Psoas muscle (tissue), 8 donors: ENCODE measurements at regions of chr1 and their contacts with region 1.

Region 1: GRCh38 chr1:179002552-179003345 is 22.9 kb upstream of the FAM20B start:
- DNase-seq: peak; percentile 74 to 84
- ATAC-seq: peak; percentile 78 to 95 (median 84)
- H3K4me3 ChIP-seq: no peak overlapping the region
- H3K27ac ChIP-seq: no peak overlapping the region
- H3K4me1 ChIP-seq: no peaks in the 10 kb centered on the region
- H3K27me3 ChIP-seq: no peaks in the 10 kb centered on the region
- CTCF ChIP-seq: peak; percentile 98

Region 2: DNA sequence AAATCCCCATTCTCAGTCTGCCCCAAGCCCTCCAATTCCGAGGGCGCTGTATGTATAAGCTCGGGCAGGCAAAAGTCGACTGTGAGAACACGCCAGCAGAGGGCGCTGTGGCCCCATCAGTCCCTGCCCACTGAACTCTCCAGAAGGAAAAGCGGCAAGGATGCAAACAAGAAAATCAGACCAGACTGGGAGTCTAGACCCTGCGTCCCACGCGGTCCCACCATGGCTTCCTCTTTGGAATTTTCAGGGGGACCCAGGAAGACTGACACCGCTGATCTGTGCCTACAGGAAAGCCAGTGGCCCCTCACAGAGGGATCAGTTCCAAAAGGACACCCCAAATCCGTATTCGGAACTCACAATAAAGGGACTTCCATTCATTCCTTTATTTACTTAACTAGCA is 470.4 kb before region 1 on chr1:
- intact Hi-C with region 1: loop called in 1 of 2 experiments (anchors 5 kb)
- DNase-seq: peak; percentile 84 to 88
- ATAC-seq: peak; percentile 44 to 70 (median 57)
- H3K4me3 ChIP-seq: no peak overlapping the region
- H3K27ac ChIP-seq: no peak overlapping the region
- H3K4me1 ChIP-seq: peaks cover 3% of the 10 kb centered on the region
- H3K27me3 ChIP-seq: no peaks in the 10 kb centered on the region
- CTCF ChIP-seq: peak; percentile 88

Region 3: DNA sequence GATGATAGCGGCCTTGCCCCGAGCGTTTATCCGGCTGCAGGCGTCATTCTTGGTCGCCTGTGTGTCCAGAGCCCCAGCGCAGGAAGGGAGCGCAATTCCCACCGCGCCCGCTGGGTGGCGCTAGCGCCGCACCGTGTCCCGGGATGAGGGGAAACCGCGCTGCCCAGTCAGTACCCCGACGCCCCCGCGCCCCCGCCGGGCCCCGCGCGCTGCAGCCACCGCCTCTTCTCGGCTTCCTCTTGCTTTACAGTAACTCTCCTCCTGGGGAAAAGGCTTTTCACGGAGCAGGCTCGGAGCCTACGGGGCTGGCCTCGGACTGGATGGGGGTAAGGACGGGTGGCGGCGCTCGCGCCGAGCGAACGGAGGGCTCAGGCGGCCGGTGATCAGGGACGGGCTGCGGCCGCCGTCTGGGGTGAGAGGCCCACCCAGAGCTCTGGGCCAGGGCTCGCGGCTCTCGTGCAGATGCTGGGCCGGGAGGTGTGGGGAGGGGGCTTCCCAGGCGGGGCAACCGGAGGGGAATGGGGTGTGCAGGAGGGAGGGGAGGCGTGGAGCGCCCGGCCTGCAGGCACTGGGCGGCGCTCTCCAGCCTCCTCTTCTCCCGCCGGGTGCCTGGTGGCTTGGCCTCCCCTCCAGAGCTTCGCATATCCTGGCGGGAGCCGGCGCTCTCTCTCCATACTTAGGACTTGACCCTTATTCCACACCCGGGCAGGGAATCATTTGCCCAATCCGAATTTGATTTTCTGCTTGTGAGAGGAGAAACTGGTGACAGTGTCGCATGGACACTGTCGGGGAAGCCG is 460.0 kb before region 1 on chr1:
- intact Hi-C with region 1: loop called (anchors 2 to 5 kb)
- DNase-seq: peak; percentile 90 to 91
- ATAC-seq: peak; percentile 84 to 92 (median 86)
- H3K4me3 ChIP-seq: peak overlapping the region; percentile 82
- H3K27ac ChIP-seq: peak overlapping the region; percentile 53
- H3K4me1 ChIP-seq: peaks cover 9% of the 10 kb centered on the region
- H3K27me3 ChIP-seq: no peaks in the 10 kb centered on the region
- CTCF ChIP-seq: peak; percentile 99

Region 4: GRCh38 chr1:178768423-178768822 is 234.3 kb before region 1 on chr1:
- intact Hi-C with region 1: loop called (anchors 2 to 5 kb)
- DNase-seq: no peak
- ATAC-seq: peak; percentile 51 to 74 (median 68)
- H3K4me3 ChIP-seq: no peak overlapping the region
- H3K27ac ChIP-seq: no peak overlapping the region
- H3K4me1 ChIP-seq: no peaks in the 10 kb centered on the region
- H3K27me3 ChIP-seq: no peaks in the 10 kb centered on the region
- CTCF ChIP-seq: peak; percentile 77

Region 5: GRCh38 chr1:178810585-178810984 is 192.2 kb before region 1 on chr1:
- intact Hi-C with region 1: loop called (anchors 5 kb)
- DNase-seq: no peak
- ATAC-seq: no peak
- H3K4me3 ChIP-seq: no peak overlapping the region
- H3K27ac ChIP-seq: no peak overlapping the region
- H3K4me1 ChIP-seq: no peaks in the 10 kb centered on the region
- H3K27me3 ChIP-seq: no peaks in the 10 kb centered on the region
- CTCF ChIP-seq: no peak

Region 6: DNA sequence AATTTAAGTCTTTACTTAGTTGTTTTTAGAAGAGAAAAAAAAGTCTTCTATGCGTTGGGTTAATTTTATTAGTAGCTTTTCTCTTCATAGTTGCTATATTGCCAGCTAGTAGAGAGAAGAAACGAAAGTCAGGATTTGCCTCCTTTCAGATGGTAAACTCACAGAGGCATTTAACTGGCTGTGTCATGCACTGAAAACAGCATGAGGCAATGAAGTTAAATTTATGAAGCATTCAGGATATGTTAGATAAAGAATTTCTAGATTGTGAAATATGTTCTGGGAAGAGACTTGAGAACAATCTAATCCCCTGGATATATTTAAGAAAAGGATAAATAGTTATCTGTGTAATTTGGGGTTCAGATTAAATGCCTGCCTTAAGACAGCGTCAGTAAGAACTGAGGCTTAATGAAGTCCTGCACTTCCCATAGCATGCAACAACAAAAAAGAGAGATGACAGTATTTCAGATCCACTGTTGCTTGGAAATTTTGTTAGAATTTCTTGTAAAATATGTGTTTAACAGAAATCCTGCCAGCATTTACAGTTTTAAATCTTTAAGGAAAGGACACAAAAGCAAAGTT is 133.5 kb before region 1 on chr1:
- intact Hi-C with region 1: loop called in 1 of 2 experiments (anchors 10 kb)
- DNase-seq: no peak
- ATAC-seq: peak; percentile 75 to 87 (median 76)
- H3K4me3 ChIP-seq: peak overlapping the region; percentile 72
- H3K27ac ChIP-seq: peak overlapping the region; percentile 74
- H3K4me1 ChIP-seq: peaks cover 15% of the 10 kb centered on the region
- H3K27me3 ChIP-seq: no peaks in the 10 kb centered on the region
- CTCF ChIP-seq: no peak

Region 7: DNA sequence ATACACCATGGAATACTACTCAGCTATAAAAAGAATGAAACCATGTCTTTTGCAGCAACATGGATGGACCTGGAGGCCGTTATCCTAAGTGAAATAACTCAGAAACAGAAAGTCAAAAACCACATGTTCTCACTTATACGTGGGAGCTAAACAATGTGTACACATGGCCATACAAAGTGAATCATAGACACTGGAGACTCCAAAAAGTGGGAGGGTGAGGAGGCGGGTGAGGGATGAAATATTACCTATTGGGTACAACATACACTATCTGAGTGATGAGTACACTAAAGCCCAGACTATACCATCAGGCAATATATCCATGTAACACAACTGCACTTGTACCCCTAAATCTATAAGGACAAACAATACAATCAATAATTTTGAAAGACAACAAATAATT is 16.5 kb before region 1 on chr1:
- intact Hi-C with region 1: no loop called
- DNase-seq: no peak
- ATAC-seq: no peak
- H3K4me3 ChIP-seq: no peak overlapping the region
- H3K27ac ChIP-seq: no peak overlapping the region
- H3K4me1 ChIP-seq: no peaks in the 10 kb centered on the region
- H3K27me3 ChIP-seq: no peaks in the 10 kb centered on the region
- CTCF ChIP-seq: no peak